Endothelial cell of umbilical vein (primary cell): ENCODE measurements at regions of chr16 and their contacts with region 1.

Region 1: DNA sequence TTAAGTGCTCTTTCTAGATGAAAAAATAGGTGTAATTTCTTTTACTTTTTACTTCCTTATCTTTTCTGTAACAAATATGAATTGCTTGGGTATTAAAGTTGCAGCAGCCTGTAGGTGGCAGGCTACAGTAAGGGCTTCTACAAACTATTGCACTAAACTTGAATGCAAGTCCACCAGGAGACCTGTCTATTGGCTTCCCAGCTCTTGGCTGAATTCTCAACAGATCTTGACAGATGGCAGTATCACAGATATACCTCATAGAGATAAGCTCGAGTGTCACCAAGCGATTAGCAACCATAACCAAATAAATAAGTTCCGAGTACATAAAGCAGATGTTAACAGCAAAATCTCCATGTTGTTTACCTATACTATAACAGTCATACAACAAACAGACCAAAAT is 5.9 kb downstream of the BBS2 start:
- DNase-seq: peak; percentile 79
- H3K4me3 ChIP-seq: no peak overlapping the region
- H3K27ac ChIP-seq: no peak overlapping the region
- H3K4me1 ChIP-seq: peaks cover 9% of the 10 kb centered on the region
- H3K27me3 ChIP-seq: no peaks in the 10 kb centered on the region
- CTCF ChIP-seq: peak; percentile 56 to 57
- POLR2A ChIP-seq: no peak

Region 2: DNA sequence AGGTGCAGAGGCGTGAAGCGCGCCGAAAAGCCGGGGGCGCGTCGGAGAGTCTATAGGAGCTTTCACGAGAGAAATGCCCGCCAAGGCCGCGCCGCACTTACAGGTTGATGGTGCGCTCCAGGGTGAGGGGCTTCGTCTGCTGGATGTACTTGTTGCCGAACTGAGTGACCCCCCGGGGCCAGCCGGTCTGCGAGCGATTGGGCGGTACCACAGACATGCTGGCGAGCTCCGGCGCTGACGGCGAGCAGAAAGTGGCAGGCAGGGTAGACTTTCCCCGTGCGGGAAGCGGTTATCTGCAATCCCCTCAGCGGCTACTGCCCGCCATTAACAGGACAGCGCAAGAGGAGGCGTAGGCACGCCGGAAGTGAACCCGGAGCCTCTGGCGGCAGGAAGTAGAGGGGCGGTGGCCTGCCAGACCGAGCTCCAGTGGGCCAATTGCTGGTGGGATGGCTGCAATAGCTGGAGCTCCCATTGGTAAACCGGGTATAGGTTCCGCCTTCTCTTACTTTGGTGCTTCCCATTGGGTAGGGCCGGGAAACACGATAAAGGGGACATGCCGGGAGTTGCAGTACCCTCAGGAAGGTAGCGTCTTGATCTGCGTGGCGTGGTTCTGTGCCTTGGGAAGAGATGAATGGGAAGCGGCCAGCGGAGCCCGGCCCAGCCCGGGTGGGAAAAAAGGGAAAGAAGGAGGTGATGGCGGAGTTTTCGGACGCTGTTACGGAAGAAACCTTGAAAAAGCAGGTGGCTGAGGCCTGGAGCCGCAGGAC is 62.8 kb before region 1 on chr16 and contains the starts of genes NUDT21 and OGFOD1:
- CTCF ChIA-PET with region 1: no interaction called
- POLR2A ChIA-PET with region 1: no interaction called
- dilution Hi-C with region 1: no loop called
- intact Hi-C with region 1: no loop called
- DNase-seq: peak; percentile 98
- H3K4me3 ChIP-seq: peak within 1 kb of the TSS; percentile 80 to 99 (median 84)
- H3K27ac ChIP-seq: peak within 1 kb of the TSS; percentile 50
- H3K4me1 ChIP-seq: peaks cover 30% of the 10 kb centered on the region
- H3K27me3 ChIP-seq: no peaks in the 10 kb centered on the region
- CTCF ChIP-seq: no peak
- POLR2A ChIP-seq: peak; percentile 75
- total RNA-seq, gene NUDT21: 155 and 158 TPM in 2 replicates
- total RNA-seq, gene OGFOD1: 52.3 and 54.8 TPM in 2 replicates

Region 3: GRCh38 chr16:56525236-56525635 is 11.3 kb after region 1 on chr16:
- CTCF ChIA-PET with region 1: interaction called, 10 read pairs
- POLR2A ChIA-PET with region 1: no interaction called
- dilution Hi-C with region 1: no loop called
- intact Hi-C with region 1: no loop called
- DNase-seq: no peak
- H3K4me3 ChIP-seq: no peak overlapping the region
- H3K27ac ChIP-seq: peak overlapping the region; percentile 88
- H3K4me1 ChIP-seq: peaks cover 12% of the 10 kb centered on the region
- H3K27me3 ChIP-seq: peaks cover 0 to 1% of the 10 kb centered on the region in 2 experiments
- CTCF ChIP-seq: no peak
- POLR2A ChIP-seq: no peak

Region 4: DNA sequence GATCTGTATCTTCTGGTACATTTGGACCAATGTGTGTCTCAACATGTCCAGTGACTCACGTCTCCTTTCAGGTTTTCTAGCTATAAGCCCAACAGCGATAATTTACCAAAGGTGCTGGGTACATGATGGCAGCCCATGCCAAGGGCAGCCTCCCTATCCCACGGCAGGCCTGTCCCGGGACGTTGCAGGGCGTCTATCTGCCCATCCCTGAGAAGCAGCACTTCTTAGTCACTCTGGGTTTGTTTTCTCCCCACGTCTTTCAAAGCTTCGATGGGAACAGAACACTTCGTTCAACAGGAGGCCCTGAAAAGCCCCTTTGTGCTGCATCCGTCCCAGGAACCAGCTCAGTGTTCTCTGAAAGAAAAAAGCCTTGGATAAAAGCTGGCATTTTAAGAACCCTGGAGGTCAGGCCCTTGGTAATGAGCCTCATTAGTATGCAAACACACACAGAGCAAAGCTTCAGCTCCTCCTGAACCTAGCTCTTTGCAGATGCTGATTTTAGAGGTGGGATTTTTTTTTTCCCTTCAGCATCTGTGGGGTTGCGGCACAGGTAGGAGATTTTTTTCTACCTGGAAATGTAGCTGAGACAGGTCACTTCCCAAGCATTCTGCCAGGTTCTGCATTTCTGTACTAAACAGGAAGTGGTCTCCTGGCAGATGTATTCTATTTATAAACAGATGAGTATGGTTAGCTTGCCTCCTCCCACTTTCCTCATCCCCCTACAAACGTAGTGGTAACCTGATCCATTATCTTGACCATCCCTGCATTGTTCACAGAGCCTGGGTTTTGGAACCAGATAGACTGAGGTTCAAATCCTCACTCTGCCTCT is 33.4 kb after region 1 on chr16:
- CTCF ChIA-PET with region 1: interaction called, 11 read pairs
- POLR2A ChIA-PET with region 1: no interaction called
- dilution Hi-C with region 1: no loop called
- intact Hi-C with region 1: no loop called
- DNase-seq: no peak
- H3K4me3 ChIP-seq: no peak overlapping the region
- H3K27ac ChIP-seq: no peak overlapping the region
- H3K4me1 ChIP-seq: peaks cover 4% of the 10 kb centered on the region
- H3K27me3 ChIP-seq: peaks cover 7% of the 10 kb centered on the region in 2 experiments
- CTCF ChIP-seq: no peak
- POLR2A ChIP-seq: no peak

Region 5: GRCh38 chr16:56561126-56561525 is 47.2 kb after region 1 on chr16:
- CTCF ChIA-PET with region 1: interaction called, 10 read pairs
- POLR2A ChIA-PET with region 1: no interaction called
- dilution Hi-C with region 1: no loop called
- intact Hi-C with region 1: no loop called
- DNase-seq: no peak
- H3K4me3 ChIP-seq: no peak overlapping the region
- H3K27ac ChIP-seq: no peak overlapping the region
- H3K4me1 ChIP-seq: no peaks in the 10 kb centered on the region
- H3K27me3 ChIP-seq: peaks cover 6 to 13% of the 10 kb centered on the region in 2 experiments
- CTCF ChIP-seq: no peak
- POLR2A ChIP-seq: no peak

Region 6: DNA sequence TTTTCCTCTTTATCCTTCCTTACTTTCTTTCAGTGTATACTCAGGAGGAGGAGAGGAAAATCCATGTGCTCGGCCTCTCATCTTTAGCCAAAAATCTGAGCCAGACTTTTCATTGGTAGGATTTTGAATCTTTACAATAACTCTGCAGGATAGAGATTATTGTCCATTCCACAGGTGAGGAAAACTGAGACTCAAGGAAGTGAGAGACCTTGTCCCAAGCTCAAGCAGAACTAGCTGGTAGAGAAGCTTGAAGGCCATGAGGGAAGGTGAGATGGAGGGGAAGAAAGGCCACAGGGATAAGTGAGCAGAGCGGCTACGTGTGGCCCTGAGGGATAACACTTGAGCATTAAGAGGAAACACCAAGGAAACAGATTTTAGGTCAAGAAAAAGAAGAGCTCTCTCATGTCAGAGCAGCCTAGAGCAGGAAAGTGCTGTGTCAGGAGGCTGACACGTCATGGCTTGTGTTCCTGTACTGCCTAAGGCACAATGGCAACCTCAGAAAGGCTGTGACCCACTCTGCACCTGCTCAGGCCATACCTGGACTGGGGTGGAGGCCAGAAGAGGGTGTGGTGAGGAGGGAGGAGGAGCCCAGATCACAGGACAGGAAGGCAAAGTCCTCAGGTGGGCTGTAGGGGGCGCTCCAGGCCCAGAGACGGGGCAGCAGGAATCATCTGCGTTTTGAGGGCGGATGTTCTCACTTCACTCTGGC is 62.8 kb after region 1 on chr16:
- CTCF ChIA-PET with region 1: interaction called, 19 read pairs
- POLR2A ChIA-PET with region 1: no interaction called
- dilution Hi-C with region 1: no loop called
- intact Hi-C with region 1: loop called (anchors 2 kb)
- DNase-seq: peak; percentile 64
- H3K4me3 ChIP-seq: no peak overlapping the region
- H3K27ac ChIP-seq: no peak overlapping the region
- H3K4me1 ChIP-seq: no peaks in the 10 kb centered on the region
- H3K27me3 ChIP-seq: peaks cover 0 to 9% of the 10 kb centered on the region in 2 experiments
- CTCF ChIP-seq: peak; percentile 86 to 91
- POLR2A ChIP-seq: no peak